ENCODE measurements at regions of chr12 and their contacts with region 1.

Region 1: DNA sequence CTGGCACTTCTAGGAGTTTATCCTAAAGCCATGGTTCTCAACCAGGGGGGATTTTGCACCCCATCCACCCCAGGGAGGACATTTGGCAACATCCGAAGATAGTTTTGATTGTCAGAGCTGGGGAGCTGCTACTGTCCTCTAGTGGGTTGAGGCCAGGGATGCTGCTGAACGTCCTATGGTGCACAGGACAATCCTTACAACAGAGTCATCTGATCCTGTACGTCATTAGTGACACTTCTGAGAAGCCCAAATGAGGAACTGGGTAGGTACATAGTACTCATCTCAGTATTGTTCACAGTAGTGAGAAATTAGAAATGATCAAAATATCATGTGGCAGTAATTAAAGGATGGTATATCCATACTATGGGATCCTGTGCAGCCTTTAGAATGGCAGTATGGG is 185.1 kb downstream of the CHST11 start:
- DNase-seq: peak; percentile 44
- ATAC-seq: peak; percentile 86
- H3K4me3 Mint-ChIP-seq: peak overlapping the region; percentile 55
- H3K27ac Mint-ChIP-seq: peak overlapping the region; percentile 95
- H3K4me1 Mint-ChIP-seq: peaks cover 83% of the 10 kb centered on the region
- H3K27me3 Mint-ChIP-seq: no peaks in the 10 kb centered on the region
- CTCF ChIP-seq: no peak

Region 2: GRCh38 chr12:104286538-104287482 is 355.1 kb before region 1 on chr12:
- CTCF ChIA-PET with region 1: no interaction called
- POLR2A ChIA-PET with region 1: no interaction called
- intact Hi-C with region 1: loop called (anchors 2 kb)
- DNase-seq: peak; percentile 76
- ATAC-seq: peak; percentile 86
- H3K4me3 Mint-ChIP-seq: peak overlapping the region; percentile 100
- H3K27ac Mint-ChIP-seq: peak overlapping the region; percentile 99
- H3K4me1 Mint-ChIP-seq: peaks cover 40% of the 10 kb centered on the region
- H3K27me3 Mint-ChIP-seq: peaks cover 2% of the 10 kb centered on the region
- CTCF ChIP-seq: no peak

Region 3: GRCh38 chr12:104569346-104570173 is 72.3 kb before region 1 on chr12:
- CTCF ChIA-PET with region 1: interaction called, 6 read pairs
- POLR2A ChIA-PET with region 1: interaction called, 15 read pairs
- intact Hi-C with region 1: loop called (anchors 1 kb)
- DNase-seq: peak; percentile 37
- ATAC-seq: peak; percentile 75
- H3K4me3 Mint-ChIP-seq: peak overlapping the region; percentile 55
- H3K27ac Mint-ChIP-seq: peak overlapping the region; percentile 82
- H3K4me1 Mint-ChIP-seq: peaks cover 73% of the 10 kb centered on the region
- H3K27me3 Mint-ChIP-seq: no peaks in the 10 kb centered on the region
- CTCF ChIP-seq: no peak

Region 4: GRCh38 chr12:104604070-104604994 is 37.5 kb before region 1 on chr12:
- CTCF ChIA-PET with region 1: no interaction called
- POLR2A ChIA-PET with region 1: no interaction called
- intact Hi-C with region 1: loop called (anchors 1 kb)
- DNase-seq: no peak
- ATAC-seq: peak; percentile 77
- H3K4me3 Mint-ChIP-seq: peak overlapping the region; percentile 11
- H3K27ac Mint-ChIP-seq: peak overlapping the region; percentile 72
- H3K4me1 Mint-ChIP-seq: peaks cover 72% of the 10 kb centered on the region
- H3K27me3 Mint-ChIP-seq: no peaks in the 10 kb centered on the region
- CTCF ChIP-seq: no peak

Region 5: GRCh38 chr12:104695453-104696148 is 53.7 kb after region 1 on chr12:
- CTCF ChIA-PET with region 1: interaction called, 6 read pairs
- POLR2A ChIA-PET with region 1: interaction called, 8 read pairs
- intact Hi-C with region 1: loop called (anchors 1 kb)
- DNase-seq: peak; percentile 49
- ATAC-seq: peak; percentile 71
- H3K4me3 Mint-ChIP-seq: peak overlapping the region; percentile 57
- H3K27ac Mint-ChIP-seq: peak overlapping the region; percentile 81
- H3K4me1 Mint-ChIP-seq: peaks cover 84% of the 10 kb centered on the region
- H3K27me3 Mint-ChIP-seq: no peaks in the 10 kb centered on the region
- CTCF ChIP-seq: no peak

Region 6: DNA sequence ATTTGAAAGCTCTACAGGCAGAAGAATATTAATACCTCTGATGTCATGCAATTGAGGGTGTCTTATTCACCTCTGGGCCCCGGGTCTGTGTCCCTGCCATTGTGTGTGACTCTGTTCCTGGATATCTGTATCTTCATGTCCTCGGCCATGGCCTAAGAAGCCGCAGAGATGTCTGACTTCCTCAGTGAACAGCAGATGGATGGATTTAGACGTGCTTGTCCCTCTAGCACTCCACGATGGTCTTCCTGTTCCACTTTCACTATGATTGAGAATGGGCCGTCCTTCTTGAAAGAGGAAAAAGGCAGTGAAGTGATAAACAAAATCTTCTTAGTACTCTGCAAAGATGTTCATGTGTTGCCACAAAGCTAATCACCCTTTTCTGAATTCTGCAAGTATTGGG is 98.8 kb after region 1 on chr12:
- CTCF ChIA-PET with region 1: no interaction called
- POLR2A ChIA-PET with region 1: no interaction called
- intact Hi-C with region 1: loop called (anchors 1 kb)
- DNase-seq: peak; percentile 30
- ATAC-seq: peak; percentile 90
- H3K4me3 Mint-ChIP-seq: peak overlapping the region; percentile 72
- H3K27ac Mint-ChIP-seq: peak overlapping the region; percentile 93
- H3K4me1 Mint-ChIP-seq: peaks cover 97% of the 10 kb centered on the region
- H3K27me3 Mint-ChIP-seq: no peaks in the 10 kb centered on the region
- CTCF ChIP-seq: no peak

Region 7: DNA sequence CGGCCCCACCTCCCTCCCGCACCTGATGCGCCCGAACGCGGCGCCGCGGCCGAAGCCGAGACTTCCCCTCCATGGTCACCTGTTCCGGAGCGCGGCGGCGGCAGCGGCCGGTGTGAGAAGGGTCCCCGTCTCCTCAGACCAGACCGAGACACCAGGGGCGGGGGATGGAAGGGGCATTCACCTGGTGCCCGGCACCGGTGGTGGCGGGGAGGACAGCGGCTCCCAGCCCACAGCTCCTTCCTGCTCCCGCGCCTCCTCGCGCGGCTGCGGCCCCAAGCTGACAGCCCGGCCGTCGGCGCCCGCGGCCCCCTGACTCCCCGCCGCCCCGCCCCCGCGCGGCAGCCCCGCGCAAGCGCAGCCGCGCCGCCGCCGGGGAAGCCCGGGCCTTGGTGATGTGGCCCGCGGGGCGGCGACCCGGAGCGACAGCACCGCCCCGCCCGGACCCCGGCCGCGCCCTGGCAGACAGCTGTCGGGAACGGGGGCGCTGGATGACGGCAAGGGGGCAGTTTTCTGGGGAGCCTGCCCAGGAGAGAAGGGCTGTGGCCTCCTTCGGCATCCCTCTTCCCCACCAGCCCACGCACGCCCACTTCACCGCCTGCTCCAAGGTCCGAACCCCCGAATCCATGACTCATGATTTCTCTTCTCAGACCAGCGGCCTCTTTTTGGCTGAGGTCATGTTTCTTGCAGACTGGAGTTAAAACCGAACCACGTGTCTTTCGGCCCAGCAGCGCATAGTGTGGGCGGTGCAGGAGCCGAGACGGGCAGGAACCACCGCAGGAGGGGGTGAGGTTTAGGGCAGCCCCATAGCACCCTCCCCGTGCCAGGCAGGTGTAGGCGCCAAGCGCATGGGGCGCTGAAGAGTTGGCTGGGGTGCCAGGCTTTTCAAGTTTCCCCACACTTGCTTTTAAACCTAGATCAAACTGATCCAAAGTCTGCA is 316.4 kb after region 1 on chr12 and contains the start of gene SLC41A2:
- CTCF ChIA-PET with region 1: no interaction called
- POLR2A ChIA-PET with region 1: no interaction called
- intact Hi-C with region 1: loop called (anchors 2 kb)
- DNase-seq: peak; percentile 90
- ATAC-seq: peak; percentile 86
- H3K4me3 Mint-ChIP-seq: peak within 1 kb of the TSS; percentile 93
- H3K27ac Mint-ChIP-seq: peak within 1 kb of the TSS; percentile 92
- H3K4me1 Mint-ChIP-seq: peaks cover 26% of the 10 kb centered on the region
- H3K27me3 Mint-ChIP-seq: peaks cover 2% of the 10 kb centered on the region
- CTCF ChIP-seq: no peak
- total RNA-seq, gene SLC41A2: 11.1 and 12.6 TPM in 2 replicates